ENCODE measurements at regions of chr1 and their contacts with region 1.

Region 1: GRCh38 chr1:81549604-81550127 is 251.1 kb upstream of the ADGRL2 start:
- DNase-seq: no peak
- ATAC-seq: peak; percentile 84

Region 2: GRCh38 chr1:81478219-81478618 is 71.4 kb before region 1 on chr1:
- intact Hi-C with region 1: no loop called
- DNase-seq: peak; percentile 75
- ATAC-seq: peak; percentile 97

Region 3: GRCh38 chr1:81760477-81761097 is 210.9 kb after region 1 on chr1:
- intact Hi-C with region 1: loop called (anchors 10 kb)
- DNase-seq: no peak
- ATAC-seq: no peak

Measured in Right ventricle myocardium superior (tissue), 1 donor.